ENCODE measurements at regions of chr5 and their contacts with region 1.

Region 1: GRCh38 chr5:131382407-131383395 is 118.8 kb downstream of the CDC42SE2 start:
- DNase-seq: peak; percentile 58
- ATAC-seq: peak; percentile 42; the same call in 1 of the 2 replicates
- H3K4me3 ChIP-seq: no peak overlapping the region
- H3K27ac ChIP-seq: no peak overlapping the region
- H3K4me1 ChIP-seq: peaks cover 15% of the 10 kb centered on the region
- H3K27me3 ChIP-seq: no peaks in the 10 kb centered on the region
- CTCF ChIP-seq: peak; percentile 50
- POLR2A ChIP-seq: no peak
- RAD21 ChIP-seq: peak; percentile 68

Region 2: DNA sequence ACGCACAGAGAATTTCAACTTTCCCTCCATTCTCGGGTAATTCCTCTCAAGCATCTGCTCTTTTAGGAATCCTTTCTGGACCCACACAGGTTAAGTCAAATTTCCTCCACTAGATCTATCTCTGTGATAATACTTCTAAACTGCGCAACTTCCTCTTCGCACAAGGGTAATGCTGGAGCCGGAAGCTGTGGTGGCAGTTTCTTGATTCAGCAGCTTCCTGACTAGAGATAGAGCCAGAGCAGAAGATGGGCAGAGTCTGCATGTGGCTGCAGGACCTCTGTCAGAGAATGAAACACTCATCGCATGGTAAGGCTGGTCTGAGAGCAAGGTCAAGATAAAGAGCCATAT is 129.9 kb before region 1 on chr5:
- CTCF ChIA-PET with region 1: no interaction called
- POLR2A ChIA-PET with region 1: no interaction called
- dilution Hi-C with region 1: no loop called
- in situ Hi-C with region 1: no loop called
- intact Hi-C with region 1: no loop called
- DNase-seq: no peak
- ATAC-seq: no peak
- H3K4me3 ChIP-seq: no peak overlapping the region
- H3K27ac ChIP-seq: no peak overlapping the region
- H3K4me1 ChIP-seq: peaks cover 6% of the 10 kb centered on the region
- H3K27me3 ChIP-seq: no peaks in the 10 kb centered on the region
- CTCF ChIP-seq: no peak
- POLR2A ChIP-seq: no peak
- RAD21 ChIP-seq: no peak

Region 3: DNA sequence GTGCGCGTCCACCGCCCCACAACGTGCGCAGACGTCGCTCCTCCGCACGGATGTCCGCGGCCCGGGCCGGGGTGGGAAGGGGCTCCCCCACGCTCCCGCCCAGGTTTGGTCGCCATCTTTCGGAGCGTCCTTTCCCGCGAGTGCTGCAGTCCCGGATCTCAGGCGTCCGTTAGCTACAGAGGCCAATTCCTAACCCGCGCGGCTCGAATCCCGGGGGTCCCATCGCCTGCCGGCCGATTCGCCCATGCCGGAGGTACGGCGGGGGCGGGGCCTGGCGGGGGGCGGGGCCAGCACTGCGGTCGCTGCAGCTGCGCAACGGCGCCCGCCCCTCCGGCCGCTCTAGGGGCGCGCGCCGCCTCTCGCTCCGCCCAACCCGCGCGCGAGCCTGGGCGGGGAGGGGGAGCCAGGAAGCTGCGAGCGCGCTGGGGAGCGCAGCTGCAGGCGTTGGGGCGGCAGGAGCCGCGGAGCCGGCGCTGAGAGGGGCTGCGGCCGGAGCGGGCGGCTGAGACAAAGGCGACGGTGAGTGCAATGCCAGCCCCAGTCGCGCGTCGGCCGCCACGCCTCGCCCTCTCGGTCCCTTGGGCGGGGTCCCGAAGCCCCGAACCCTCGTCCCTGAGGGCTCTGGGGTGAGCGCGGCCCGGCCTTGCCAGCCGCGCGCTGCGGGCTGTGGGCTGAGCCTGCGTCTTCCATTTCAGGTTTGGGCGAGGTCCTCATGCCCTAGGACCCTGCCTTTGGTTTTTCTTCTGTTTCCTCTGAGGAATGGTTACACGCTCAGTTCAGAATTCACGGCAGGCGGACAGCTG is 118.9 kb before region 1 on chr5 and contains the start of gene CDC42SE2:
- CTCF ChIA-PET with region 1: interaction called, 3 read pairs
- POLR2A ChIA-PET with region 1: no interaction called
- dilution Hi-C with region 1: no loop called
- in situ Hi-C with region 1: no loop called
- intact Hi-C with region 1: loop called (anchors 5 kb)
- DNase-seq: peak; percentile 80
- ATAC-seq: peak; percentile 98
- H3K4me3 ChIP-seq: peak within 1 kb of the TSS; percentile 99
- H3K27ac ChIP-seq: peak within 1 kb of the TSS; percentile 91
- H3K4me1 ChIP-seq: peaks cover 3% of the 10 kb centered on the region
- H3K27me3 ChIP-seq: no peaks in the 10 kb centered on the region
- CTCF ChIP-seq: no peak
- POLR2A ChIP-seq: peak; percentile 83
- RAD21 ChIP-seq: peak; percentile 15; the same call in 1 of the 2 replicates
- total RNA-seq, gene CDC42SE2: 19.4 and 44.2 TPM in 2 replicates

Region 4: GRCh38 chr5:131394128-131394527 is 11.4 kb after region 1 on chr5:
- CTCF ChIA-PET with region 1: no interaction called
- POLR2A ChIA-PET with region 1: no interaction called
- dilution Hi-C with region 1: no loop called
- in situ Hi-C with region 1: no loop called
- intact Hi-C with region 1: no loop called
- DNase-seq: peak; percentile 69
- ATAC-seq: no peak
- H3K4me3 ChIP-seq: no peak overlapping the region
- H3K27ac ChIP-seq: no peak overlapping the region
- H3K4me1 ChIP-seq: no peaks in the 10 kb centered on the region
- H3K27me3 ChIP-seq: no peaks in the 10 kb centered on the region
- CTCF ChIP-seq: no peak
- POLR2A ChIP-seq: no peak
- RAD21 ChIP-seq: no peak

Region 5: DNA sequence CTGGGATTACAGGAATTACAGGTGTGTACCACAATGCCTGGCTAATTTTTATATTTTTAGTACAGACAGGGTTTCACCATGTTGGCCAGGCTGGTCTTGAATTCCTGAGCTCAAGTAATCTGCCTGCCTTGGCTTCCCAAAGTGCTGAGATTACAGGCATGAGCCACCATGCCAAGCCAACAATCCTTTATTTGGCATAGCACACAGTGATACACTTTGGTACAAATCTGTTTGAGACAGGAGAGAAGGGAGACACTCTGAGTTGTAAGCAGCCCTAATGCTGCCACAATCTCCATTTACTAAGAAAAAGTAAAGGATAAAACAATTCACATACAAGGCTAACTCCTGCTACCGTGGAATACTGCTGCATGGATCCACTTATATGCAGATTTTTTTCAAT is 74.5 kb after region 1 on chr5:
- CTCF ChIA-PET with region 1: no interaction called
- POLR2A ChIA-PET with region 1: no interaction called
- dilution Hi-C with region 1: no loop called
- in situ Hi-C with region 1: no loop called
- intact Hi-C with region 1: no loop called
- DNase-seq: no peak
- ATAC-seq: no peak
- H3K4me3 ChIP-seq: no peak overlapping the region
- H3K27ac ChIP-seq: no peak overlapping the region
- H3K4me1 ChIP-seq: no peaks in the 10 kb centered on the region
- H3K27me3 ChIP-seq: no peaks in the 10 kb centered on the region
- CTCF ChIP-seq: no peak
- POLR2A ChIP-seq: no peak
- RAD21 ChIP-seq: no peak

Region 6: DNA sequence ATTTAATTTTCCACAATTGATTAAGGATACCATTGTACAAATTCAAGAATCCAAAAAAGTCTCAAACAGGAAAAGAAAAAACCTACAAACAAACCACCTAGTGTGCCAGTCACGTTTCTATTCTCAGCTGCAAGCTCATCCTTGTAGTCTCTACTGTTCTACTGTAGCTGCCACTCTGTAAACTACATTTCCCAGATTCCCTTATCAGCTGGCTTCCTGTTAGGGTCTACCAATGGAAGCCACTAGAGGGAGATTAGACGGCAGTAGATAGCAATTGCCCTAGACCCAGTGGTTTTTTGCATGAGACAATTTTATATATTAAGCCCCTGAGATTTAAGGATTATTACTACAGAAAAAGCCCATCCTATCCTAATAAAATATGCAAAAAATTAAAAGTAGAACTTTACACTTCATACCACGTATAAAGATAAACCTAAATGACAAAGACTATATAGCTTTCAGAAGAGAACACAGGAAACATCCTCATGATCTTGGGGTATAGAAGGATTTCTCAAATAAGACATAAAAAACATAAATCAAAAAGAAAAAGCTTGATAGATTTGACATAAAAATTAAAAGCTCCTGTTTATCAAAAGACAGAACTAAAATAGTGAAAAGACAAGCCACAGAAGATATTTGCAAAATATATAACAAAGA is 807.6 kb after region 1 on chr5:
- CTCF ChIA-PET with region 1: no interaction called
- POLR2A ChIA-PET with region 1: no interaction called
- dilution Hi-C with region 1: no loop called
- in situ Hi-C with region 1: no loop called
- intact Hi-C with region 1: no loop called
- DNase-seq: peak; percentile 81
- ATAC-seq: peak; percentile 100
- H3K4me3 ChIP-seq: no peak overlapping the region
- H3K27ac ChIP-seq: no peak overlapping the region
- H3K4me1 ChIP-seq: no peaks in the 10 kb centered on the region
- H3K27me3 ChIP-seq: no peaks in the 10 kb centered on the region
- CTCF ChIP-seq: peak; percentile 87
- POLR2A ChIP-seq: no peak
- RAD21 ChIP-seq: peak; percentile 75